Endothelial cell of umbilical vein (primary cell): ENCODE measurements at regions of chr14 and their contacts with region 1.

Region 1: GRCh38 chr14:55438066-55438683 is 2.2 kb downstream of the TBPL2 start:
- DNase-seq: peak; percentile 58
- H3K4me3 ChIP-seq: no peak overlapping the region
- H3K27ac ChIP-seq: no peak overlapping the region
- H3K4me1 ChIP-seq: no peaks in the 10 kb centered on the region
- H3K27me3 ChIP-seq: peaks cover 2 to 5% of the 10 kb centered on the region in 2 experiments
- CTCF ChIP-seq: peak; percentile 53 to 56
- POLR2A ChIP-seq: no peak

Region 2: DNA sequence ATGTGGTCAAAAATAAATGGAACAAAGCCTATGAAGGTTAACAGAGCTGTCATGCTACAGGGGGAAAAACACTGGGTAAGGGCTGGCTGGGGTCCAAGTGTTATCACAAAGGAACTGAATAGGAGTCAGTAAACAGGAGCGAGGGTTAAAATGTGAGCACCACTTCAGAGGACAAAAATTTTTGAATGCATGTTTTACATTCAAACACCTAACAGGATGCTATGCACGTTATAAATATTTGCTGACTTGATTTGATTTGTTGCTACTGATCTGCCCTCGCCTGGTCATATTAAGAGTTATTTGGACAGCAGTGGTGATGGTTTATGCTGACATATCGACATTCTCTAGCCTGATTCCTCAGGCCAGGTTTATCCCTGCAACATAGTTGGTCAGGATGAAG is 134.4 kb after region 1 on chr14:
- CTCF ChIA-PET with region 1: interaction called, 13 read pairs
- POLR2A ChIA-PET with region 1: no interaction called
- dilution Hi-C with region 1: no loop called
- intact Hi-C with region 1: no loop called
- DNase-seq: peak; percentile 82
- H3K4me3 ChIP-seq: no peak overlapping the region
- H3K27ac ChIP-seq: no peak overlapping the region
- H3K4me1 ChIP-seq: peaks cover 11% of the 10 kb centered on the region
- H3K27me3 ChIP-seq: no peaks in the 10 kb centered on the region
- CTCF ChIP-seq: no peak
- POLR2A ChIP-seq: peak; percentile 30

Region 3: DNA sequence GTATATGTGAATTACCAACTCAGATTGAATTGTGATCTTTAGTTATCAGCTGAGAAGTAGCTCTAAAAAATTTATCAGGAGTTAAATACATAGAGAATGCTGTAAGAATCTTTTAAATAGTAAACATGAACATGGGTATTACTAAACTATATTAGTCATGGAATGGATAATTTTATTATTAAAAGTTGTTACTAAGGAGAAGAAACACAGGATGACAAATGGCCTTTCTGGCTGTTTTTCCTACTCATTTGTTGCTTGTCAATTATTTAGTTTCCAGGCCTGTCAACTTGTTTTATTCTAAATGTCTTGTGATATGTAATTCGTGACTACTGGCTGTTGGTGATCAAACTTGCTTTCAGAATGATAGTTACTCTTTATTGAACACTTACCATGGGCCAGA is 200.5 kb after region 1 on chr14:
- CTCF ChIA-PET with region 1: interaction called, 42 read pairs
- POLR2A ChIA-PET with region 1: no interaction called
- dilution Hi-C with region 1: no loop called
- intact Hi-C with region 1: loop called (anchors 10 kb)
- DNase-seq: peak; percentile 16
- H3K4me3 ChIP-seq: no peak overlapping the region
- H3K27ac ChIP-seq: no peak overlapping the region
- H3K4me1 ChIP-seq: no peaks in the 10 kb centered on the region
- H3K27me3 ChIP-seq: no peaks in the 10 kb centered on the region
- CTCF ChIP-seq: no peak
- POLR2A ChIP-seq: no peak

Region 4: DNA sequence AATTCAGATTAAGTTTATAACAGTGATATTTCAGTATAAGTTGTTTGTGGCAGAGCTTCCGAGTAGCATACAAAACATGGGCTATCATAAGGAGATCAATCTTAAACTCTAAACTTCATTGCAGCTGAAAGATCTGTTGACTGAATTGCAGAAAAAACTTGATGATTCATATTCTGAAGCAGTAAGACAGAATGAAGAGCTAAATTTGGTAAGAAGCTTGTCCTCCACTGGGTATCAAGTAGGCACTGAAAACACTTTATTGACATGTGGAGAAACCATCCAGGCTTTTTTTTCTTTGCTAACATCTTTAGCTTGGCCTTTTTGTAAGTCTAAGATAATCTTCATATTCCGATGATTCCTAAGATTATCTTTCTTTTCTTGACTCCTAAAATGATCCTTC is 234.9 kb after region 1 on chr14:
- CTCF ChIA-PET with region 1: interaction called, 10 read pairs
- POLR2A ChIA-PET with region 1: no interaction called
- dilution Hi-C with region 1: no loop called
- intact Hi-C with region 1: no loop called
- DNase-seq: no peak
- H3K4me3 ChIP-seq: no peak overlapping the region
- H3K27ac ChIP-seq: no peak overlapping the region
- H3K4me1 ChIP-seq: no peaks in the 10 kb centered on the region
- H3K27me3 ChIP-seq: no peaks in the 10 kb centered on the region
- CTCF ChIP-seq: no peak
- POLR2A ChIP-seq: no peak

Region 5: DNA sequence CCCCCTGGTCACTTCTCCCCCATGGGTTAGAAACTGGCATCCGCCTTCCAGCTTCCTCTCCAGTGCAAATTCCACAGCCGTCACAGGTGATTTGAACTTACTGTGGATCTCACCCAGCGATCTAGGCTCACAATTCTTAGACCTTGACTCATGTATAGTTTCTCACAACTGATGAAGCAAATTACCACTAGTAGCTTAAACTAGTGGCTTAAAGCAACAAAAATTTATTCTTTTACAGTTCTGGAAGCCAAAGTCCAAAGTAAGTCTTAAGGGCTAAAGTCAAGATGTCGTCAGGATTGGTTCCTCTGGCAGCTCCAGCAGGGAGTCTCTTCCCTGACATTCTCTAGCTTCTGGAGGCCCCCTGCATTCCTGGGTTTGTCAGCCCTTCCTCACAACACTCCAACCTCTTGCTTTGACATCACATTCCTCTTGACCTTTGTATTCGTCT is 259.3 kb after region 1 on chr14:
- CTCF ChIA-PET with region 1: interaction called, 10 read pairs
- POLR2A ChIA-PET with region 1: no interaction called
- dilution Hi-C with region 1: no loop called
- intact Hi-C with region 1: no loop called
- DNase-seq: no peak
- H3K4me3 ChIP-seq: no peak overlapping the region
- H3K27ac ChIP-seq: no peak overlapping the region
- H3K4me1 ChIP-seq: peaks cover 4% of the 10 kb centered on the region
- H3K27me3 ChIP-seq: no peaks in the 10 kb centered on the region
- CTCF ChIP-seq: no peak
- POLR2A ChIP-seq: no peak

Region 6: DNA sequence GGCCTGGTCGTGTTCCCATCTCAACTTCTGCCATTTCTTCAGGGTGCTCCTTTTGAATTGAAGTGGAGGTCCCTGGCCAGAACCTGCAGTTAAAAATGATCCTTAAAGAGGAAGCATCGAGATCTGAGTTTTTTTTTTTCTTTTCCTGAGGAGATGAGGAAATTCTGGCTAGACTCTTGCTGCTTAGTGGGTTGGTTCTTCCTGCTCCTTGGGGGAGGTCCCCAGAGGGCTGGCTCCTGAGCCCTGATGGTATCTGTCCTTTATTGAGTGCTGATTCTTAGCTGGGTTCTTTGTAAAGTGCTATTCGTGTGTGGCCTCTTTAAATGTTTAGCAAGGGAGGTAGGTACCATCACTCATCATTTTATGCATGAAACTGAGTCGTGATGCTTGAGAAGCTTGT is 691.8 kb after region 1 on chr14:
- CTCF ChIA-PET with region 1: no interaction called
- POLR2A ChIA-PET with region 1: no interaction called
- dilution Hi-C with region 1: no loop called
- intact Hi-C with region 1: no loop called
- DNase-seq: peak; percentile 13
- H3K4me3 ChIP-seq: no peak overlapping the region
- H3K27ac ChIP-seq: no peak overlapping the region
- H3K4me1 ChIP-seq: peaks cover 4% of the 10 kb centered on the region
- H3K27me3 ChIP-seq: no peaks in the 10 kb centered on the region
- CTCF ChIP-seq: no peak
- POLR2A ChIP-seq: no peak

Region 7: GRCh38 chr14:56422703-56423213 is 984.6 kb after region 1 on chr14:
- CTCF ChIA-PET with region 1: interaction called, 25 read pairs
- POLR2A ChIA-PET with region 1: no interaction called
- dilution Hi-C with region 1: no loop called
- intact Hi-C with region 1: loop called (anchors 2 kb)
- DNase-seq: peak; percentile 84
- H3K4me3 ChIP-seq: no peak overlapping the region
- H3K27ac ChIP-seq: no peak overlapping the region
- H3K4me1 ChIP-seq: no peaks in the 10 kb centered on the region
- H3K27me3 ChIP-seq: no peaks in the 10 kb centered on the region
- CTCF ChIP-seq: peak; percentile 59 to 71
- POLR2A ChIP-seq: no peak

Region 8: DNA sequence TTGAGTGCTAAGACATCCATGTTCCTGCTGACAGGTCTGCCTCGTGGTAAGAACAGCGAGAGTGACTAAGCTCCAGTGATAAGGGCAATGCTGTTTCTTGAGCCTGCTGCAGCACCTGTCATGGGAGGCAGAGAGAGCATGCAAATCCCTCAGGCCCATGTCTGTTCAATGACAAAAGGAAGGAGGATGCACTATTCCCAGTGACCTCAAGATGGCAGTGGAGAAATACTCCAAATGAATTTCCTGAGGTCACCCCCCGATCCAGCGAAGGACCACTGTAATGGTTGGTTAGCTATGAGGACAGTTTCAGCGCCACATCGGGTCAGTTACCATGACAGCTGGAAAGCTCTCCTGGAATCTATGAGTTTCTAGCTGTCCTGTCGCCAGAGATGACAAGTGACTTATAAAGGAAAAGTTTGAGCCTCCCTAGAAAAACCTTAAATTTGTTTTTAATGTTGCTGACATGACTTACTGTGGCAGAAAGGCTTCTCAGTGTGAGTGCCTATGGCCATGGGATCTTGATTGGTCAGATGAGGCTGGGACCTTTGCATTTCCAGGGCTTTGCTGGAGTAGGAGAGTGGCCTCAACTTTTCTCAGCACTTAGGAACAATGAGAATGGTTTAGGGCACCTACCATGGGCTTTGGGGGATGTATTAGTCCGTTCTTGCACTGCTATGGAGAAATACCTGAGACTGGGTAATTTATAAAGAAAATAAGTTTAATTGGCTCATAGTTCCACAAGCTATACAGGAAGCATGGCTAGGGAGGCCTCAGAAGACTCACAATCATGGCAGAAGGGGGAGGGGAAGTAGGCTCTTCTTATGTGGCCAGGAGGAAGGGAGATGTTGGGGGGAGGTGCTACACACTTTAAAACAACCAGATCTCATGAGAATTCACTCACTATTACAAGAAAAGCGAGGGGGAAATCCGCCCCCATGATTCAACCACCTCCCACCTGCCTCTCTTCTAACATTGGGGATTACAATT is 1053.4 kb after region 1 on chr14:
- CTCF ChIA-PET with region 1: interaction called, 87 read pairs
- POLR2A ChIA-PET with region 1: no interaction called
- dilution Hi-C with region 1: no loop called
- intact Hi-C with region 1: no loop called
- DNase-seq: peak; percentile 68
- H3K4me3 ChIP-seq: no peak overlapping the region
- H3K27ac ChIP-seq: no peak overlapping the region
- H3K4me1 ChIP-seq: no peaks in the 10 kb centered on the region
- H3K27me3 ChIP-seq: peaks cover 2 to 6% of the 10 kb centered on the region in 2 experiments
- CTCF ChIP-seq: peak; percentile 61 to 64
- POLR2A ChIP-seq: no peak